Transverse colon (tissue), 4 donors: ENCODE measurements at regions of chr1 and their contacts with region 1.

Region 1: GRCh38 chr1:38873027-38873969 is at the start of gene MYCBP:
- DNase-seq: peak; percentile 97
- H3K4me3 ChIP-seq: peak within 1 kb of the TSS; percentile 52 to 97 (median 81)
- H3K27ac ChIP-seq: peak within 1 kb of the TSS; percentile 83 to 88 (median 84)
- H3K4me1 ChIP-seq: peaks cover 4 to 22% (median 18%) of the 10 kb centered on the region in 4 donors
- H3K27me3 ChIP-seq: no peaks in the 10 kb centered on the region
- CTCF ChIP-seq: peak in 4 of 5 experiments; percentile 23 to 63 (median 38)
- EP300 ChIP-seq: no peak
- POLR2A ChIP-seq: peak; percentile 48
- total RNA-seq, gene MYCBP: 2.2 to 24.3 (median 16.2) TPM

Region 2: GRCh38 chr1:39081266-39082009 is 208.1 kb after region 1 on chr1:
- in situ Hi-C with region 1: loop called in 1 of 4 experiments (anchors 10 kb)
- intact Hi-C with region 1: no loop called
- DNase-seq: peak; percentile 27
- H3K4me3 ChIP-seq: peak overlapping the region; percentile 45 to 65 (median 48)
- H3K27ac ChIP-seq: no peak overlapping the region
- H3K4me1 ChIP-seq: peaks cover 0 to 19% (median 13%) of the 10 kb centered on the region in 4 donors
- H3K27me3 ChIP-seq: peaks cover 53% of the 10 kb centered on the region
- CTCF ChIP-seq: no peak
- EP300 ChIP-seq: no peak
- POLR2A ChIP-seq: no peak